ENCODE measurements at regions of chr10 and their contacts with region 1.

Region 1: GRCh38 chr10:114550756-114551635 is 107.1 kb downstream of the ABLIM1 start:
- DNase-seq: peak in 1 of 2 donors; percentile 35
- ATAC-seq: peak in 1 of 2 donors; percentile 10
- H3K4me3 ChIP-seq: peak overlapping the region in 2 of 4 donors; percentile 11 to 27
- H3K27ac ChIP-seq: peak overlapping the region; percentile 62 to 81 (median 78)
- H3K4me1 ChIP-seq: peaks cover 18 to 50% of the 10 kb centered on the region in 2 donors
- H3K27me3 ChIP-seq: no peaks in the 10 kb centered on the region
- CTCF ChIP-seq: peak; percentile 37 to 57 (median 56)
- POLR2A ChIP-seq: no peak

Region 2: GRCh38 chr10:114470956-114471905 is 79.8 kb before region 1 on chr10:
- in situ Hi-C with region 1: loop called in 3 of 4 experiments (anchors 5 kb)
- intact Hi-C with region 1: loop called (anchors 1 kb)
- DNase-seq: peak; percentile 31 to 55
- ATAC-seq: peak; percentile 85 to 86
- H3K4me3 ChIP-seq: no peak overlapping the region
- H3K27ac ChIP-seq: peak overlapping the region; percentile 68 to 80 (median 76)
- H3K4me1 ChIP-seq: peaks cover 13 to 34% of the 10 kb centered on the region in 2 donors
- H3K27me3 ChIP-seq: no peaks in the 10 kb centered on the region
- CTCF ChIP-seq: peak; percentile 66 to 93 (median 77)
- POLR2A ChIP-seq: no peak

Region 3: GRCh38 chr10:114565066-114565465 is 14.1 kb after region 1 on chr10:
- in situ Hi-C with region 1: no loop called
- intact Hi-C with region 1: no loop called
- DNase-seq: no peak
- ATAC-seq: no peak
- H3K4me3 ChIP-seq: no peak overlapping the region
- H3K27ac ChIP-seq: peak overlapping the region in 3 of 4 donors; percentile 3 to 32 (median 12)
- H3K4me1 ChIP-seq: peaks cover 0 to 6% of the 10 kb centered on the region in 2 donors
- H3K27me3 ChIP-seq: no peaks in the 10 kb centered on the region
- CTCF ChIP-seq: no peak
- POLR2A ChIP-seq: no peak

Region 4: GRCh38 chr10:114684085-114684821 is 133.3 kb after region 1 on chr10:
- in situ Hi-C with region 1: no loop called
- intact Hi-C with region 1: loop called (anchors 5 kb)
- DNase-seq: no peak
- ATAC-seq: peak in 1 of 2 donors; percentile 32
- H3K4me3 ChIP-seq: peak overlapping the region; percentile 23 to 47 (median 36)
- H3K27ac ChIP-seq: peak overlapping the region; percentile 74 to 83 (median 76)
- H3K4me1 ChIP-seq: peaks cover 8 to 46% of the 10 kb centered on the region in 2 donors
- H3K27me3 ChIP-seq: no peaks in the 10 kb centered on the region
- CTCF ChIP-seq: no peak
- POLR2A ChIP-seq: peak in 1 of 2 donors; percentile 5

Region 5: GRCh38 chr10:114703377-114704107 is 152.5 kb after region 1 on chr10:
- in situ Hi-C with region 1: loop called in 3 of 4 experiments (anchors 5 to 10 kb)
- intact Hi-C with region 1: loop called (anchors 2 kb)
- DNase-seq: no peak
- ATAC-seq: peak; percentile 28 to 68
- H3K4me3 ChIP-seq: no peak overlapping the region
- H3K27ac ChIP-seq: peak overlapping the region in 2 of 4 donors; percentile 18 to 35
- H3K4me1 ChIP-seq: peaks cover 0 to 7% of the 10 kb centered on the region in 2 donors
- H3K27me3 ChIP-seq: no peaks in the 10 kb centered on the region
- CTCF ChIP-seq: peak; percentile 41 to 71 (median 62)
- POLR2A ChIP-seq: no peak

Region 6: DNA sequence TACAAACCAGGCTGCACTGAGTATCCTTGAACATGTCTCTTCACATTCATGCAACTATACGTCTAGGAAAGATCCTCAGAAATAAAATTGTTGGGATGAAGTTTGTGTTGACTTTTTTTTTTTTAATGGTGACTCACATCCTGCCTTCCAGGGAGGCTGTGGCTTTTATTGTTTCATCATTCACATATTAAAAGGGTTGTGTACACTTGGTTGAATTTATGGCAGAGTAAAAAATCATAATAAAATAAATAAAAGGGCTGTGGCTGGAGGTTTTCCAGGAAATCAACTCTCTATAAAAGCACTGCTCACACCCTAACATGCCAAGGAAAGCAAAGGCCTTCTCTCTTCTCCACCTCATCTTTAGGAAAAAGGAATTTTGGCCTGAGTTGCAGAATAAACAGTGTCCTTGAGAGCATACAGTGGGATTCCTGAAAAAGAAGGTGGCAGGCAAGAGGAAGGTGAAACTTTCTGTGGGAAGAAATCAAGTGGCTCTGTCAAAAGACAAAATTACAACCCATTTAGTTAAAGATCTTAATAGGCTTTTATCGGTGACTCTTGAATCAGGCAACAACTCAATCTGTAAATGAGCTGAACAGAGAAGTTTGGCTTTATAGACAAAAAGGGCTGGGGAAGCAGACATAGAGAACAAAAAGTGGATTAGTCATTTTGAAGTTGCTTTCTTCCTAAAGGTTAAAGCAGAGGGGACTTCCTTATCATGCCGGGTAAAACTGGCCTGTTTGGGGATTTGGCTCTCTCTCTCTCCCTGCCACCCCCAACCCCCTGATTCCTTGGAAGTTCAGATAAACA is 229.0 kb after region 1 on chr10:
- in situ Hi-C with region 1: loop called (anchors 5 to 10 kb)
- intact Hi-C with region 1: loop called (anchors 1 kb)
- DNase-seq: no peak
- ATAC-seq: peak in 1 of 2 donors; percentile 33
- H3K4me3 ChIP-seq: no peak overlapping the region
- H3K27ac ChIP-seq: peak overlapping the region in 3 of 4 donors; percentile 24 to 46 (median 39)
- H3K4me1 ChIP-seq: no peaks in the 10 kb centered on the region
- H3K27me3 ChIP-seq: no peaks in the 10 kb centered on the region
- CTCF ChIP-seq: no peak
- POLR2A ChIP-seq: peak in 1 of 2 donors; percentile 19

Region 7: DNA sequence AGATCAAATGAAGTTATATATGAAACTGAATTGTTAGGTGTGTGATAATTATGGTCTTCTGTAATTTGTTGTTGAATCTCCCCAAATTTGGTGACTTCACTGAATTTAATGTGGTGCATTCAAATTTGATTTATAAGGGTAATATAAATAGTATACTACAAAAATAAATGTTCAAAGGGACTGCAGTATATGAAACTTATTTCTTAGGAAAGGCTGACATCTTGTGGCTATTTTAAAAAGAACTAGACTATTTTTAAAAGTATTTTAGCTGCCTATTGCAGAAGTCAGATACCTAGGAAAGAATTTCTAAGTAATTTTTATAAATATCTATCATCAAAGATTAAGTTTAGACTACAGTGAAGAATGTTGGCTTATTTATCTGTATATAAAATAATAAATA is 578.8 kb after region 1 on chr10:
- in situ Hi-C with region 1: loop called in 1 of 4 experiments (anchors 25 kb)
- intact Hi-C with region 1: no loop called
- DNase-seq: no peak
- ATAC-seq: peak in 1 of 2 donors; percentile 44
- H3K4me3 ChIP-seq: no peak overlapping the region
- H3K27ac ChIP-seq: no peak overlapping the region
- H3K4me1 ChIP-seq: no peaks in the 10 kb centered on the region
- H3K27me3 ChIP-seq: no peaks in the 10 kb centered on the region
- CTCF ChIP-seq: peak; percentile 19 to 42 (median 40)
- POLR2A ChIP-seq: no peak